Activated CD8-positive, alpha-beta T cell treated with anti-CD3 and anti-CD28 coated beads, Interleukin-2, amount 10 ng/mL, durations not matched to agents 7 days and 5 days (primary cell): ENCODE measurements at regions of chr17 and their contacts with region 1.

Region 1: GRCh38 chr17:77068915-77069314 is 71.9 kb upstream of the SEC14L1 start:
- DNase-seq: no peak
- ATAC-seq: no peak
- H3K4me3 Mint-ChIP-seq: no peak overlapping the region
- H3K27ac Mint-ChIP-seq: no peak overlapping the region
- H3K4me1 Mint-ChIP-seq: peaks cover 1% of the 10 kb centered on the region
- H3K27me3 Mint-ChIP-seq: peaks cover 22% of the 10 kb centered on the region

Region 2: DNA sequence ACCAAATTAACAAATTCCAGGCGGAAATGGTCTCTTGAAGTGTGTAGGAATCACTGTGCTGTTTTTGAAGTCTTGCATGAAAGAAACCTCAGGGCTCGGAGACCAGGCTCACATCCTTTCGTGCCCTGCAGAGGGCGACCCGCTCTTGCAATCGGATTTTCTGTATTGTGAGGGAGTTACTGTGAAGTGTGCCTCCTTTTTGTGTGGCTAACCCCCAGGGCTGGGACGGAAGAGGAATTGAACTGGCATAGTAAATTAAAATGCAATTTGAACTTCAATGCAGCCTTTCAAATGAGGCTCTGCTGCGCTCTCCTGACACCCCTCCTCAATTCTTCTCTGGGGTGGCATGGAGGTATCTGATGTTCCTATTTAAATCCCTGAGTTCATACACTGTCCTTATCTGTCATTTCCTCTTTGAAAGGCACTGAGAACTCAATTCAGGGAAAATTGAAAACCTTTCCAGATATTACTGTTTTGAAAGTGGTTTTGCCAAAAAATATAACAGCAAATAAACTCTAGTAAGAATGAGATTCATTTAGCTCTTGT is 252.3 kb before region 1 on chr17:
- CTCF ChIA-PET with region 1: interaction called, 10 read pairs
- POLR2A ChIA-PET with region 1: no interaction called
- DNase-seq: peak; percentile 79
- ATAC-seq: peak; percentile 93
- H3K4me3 Mint-ChIP-seq: no peak overlapping the region
- H3K27ac Mint-ChIP-seq: no peak overlapping the region
- H3K4me1 Mint-ChIP-seq: peaks cover 7% of the 10 kb centered on the region
- H3K27me3 Mint-ChIP-seq: peaks cover 5% of the 10 kb centered on the region

Region 3: GRCh38 chr17:76868176-76868668 is 200.7 kb before region 1 on chr17 and contains the start of gene MGAT5B:
- CTCF ChIA-PET with region 1: interaction called, 38 read pairs
- POLR2A ChIA-PET with region 1: no interaction called
- DNase-seq: peak; percentile 77
- ATAC-seq: peak; percentile 97
- H3K4me3 Mint-ChIP-seq: peak within 1 kb of the TSS; percentile 40
- H3K27ac Mint-ChIP-seq: no peak within 1 kb of the TSS
- H3K4me1 Mint-ChIP-seq: peaks cover 15% of the 10 kb centered on the region
- H3K27me3 Mint-ChIP-seq: peaks cover 28% of the 10 kb centered on the region
- total RNA-seq, gene MGAT5B: 0.26 TPM in 1 of 2 experiments, not detected in the other

Region 4: DNA sequence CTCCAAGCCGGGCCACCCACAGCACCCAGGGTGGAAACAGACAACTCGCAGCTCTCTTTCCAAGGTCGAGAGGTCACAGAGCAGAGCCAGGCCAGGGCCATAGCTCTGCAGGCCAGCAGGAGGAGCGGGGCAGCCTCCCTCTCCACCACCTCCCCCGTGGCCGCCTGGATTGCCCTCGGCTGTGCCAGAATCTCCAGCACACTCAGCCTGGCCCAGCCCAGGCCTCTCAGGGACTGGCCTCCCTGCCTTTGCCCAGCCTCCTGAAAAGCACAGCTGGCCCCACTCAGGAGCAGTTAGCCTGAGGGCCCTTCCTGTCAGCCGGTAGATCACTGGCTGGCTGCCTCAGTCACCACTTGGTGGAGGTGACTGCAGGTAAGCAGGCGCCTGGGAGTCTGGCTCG is 14.0 kb before region 1 on chr17:
- CTCF ChIA-PET with region 1: interaction called, 42 read pairs
- POLR2A ChIA-PET with region 1: interaction called, 4 read pairs
- DNase-seq: no peak
- ATAC-seq: no peak
- H3K4me3 Mint-ChIP-seq: no peak overlapping the region
- H3K27ac Mint-ChIP-seq: no peak overlapping the region
- H3K4me1 Mint-ChIP-seq: no peaks in the 10 kb centered on the region
- H3K27me3 Mint-ChIP-seq: peaks cover 9% of the 10 kb centered on the region

Region 5: GRCh38 chr17:77079025-77079714 is 10.3 kb after region 1 on chr17:
- CTCF ChIA-PET with region 1: interaction called, 10 read pairs
- POLR2A ChIA-PET with region 1: no interaction called
- DNase-seq: no peak
- ATAC-seq: no peak
- H3K4me3 Mint-ChIP-seq: no peak overlapping the region
- H3K27ac Mint-ChIP-seq: no peak overlapping the region
- H3K4me1 Mint-ChIP-seq: no peaks in the 10 kb centered on the region
- H3K27me3 Mint-ChIP-seq: peaks cover 10% of the 10 kb centered on the region

Region 6: DNA sequence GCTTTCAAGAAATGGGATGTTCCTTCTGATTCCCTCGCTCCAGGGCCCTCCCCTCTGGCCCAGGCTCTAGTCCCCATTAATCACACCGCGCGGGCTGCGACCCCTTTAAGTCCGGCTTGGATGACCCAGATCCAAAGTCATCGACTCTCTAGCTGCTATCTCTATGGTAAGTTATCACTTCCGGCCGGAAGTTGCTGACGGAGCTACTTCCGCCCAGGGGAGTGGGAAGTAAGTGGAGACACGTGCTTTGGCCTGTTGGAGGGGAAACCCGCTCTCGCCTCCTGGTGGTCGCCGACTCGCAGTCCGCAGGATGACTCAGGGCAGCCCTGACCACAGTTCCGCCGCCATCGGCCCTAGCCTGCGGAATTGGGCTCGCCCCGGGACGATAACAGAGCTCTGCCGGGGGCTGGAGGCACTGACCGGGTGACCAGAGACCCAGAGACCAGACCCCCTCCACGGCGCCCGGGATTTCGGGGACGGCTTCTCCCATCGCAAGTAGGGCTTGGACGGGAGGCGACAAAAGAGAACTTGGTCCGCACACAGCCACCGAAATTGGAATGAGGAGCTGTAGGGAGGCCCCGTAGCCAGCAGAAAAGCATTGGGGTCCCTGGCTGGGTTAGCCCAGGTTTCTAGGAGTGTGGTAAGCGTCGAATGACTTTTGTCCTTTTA is 19.7 kb after region 1 on chr17:
- CTCF ChIA-PET with region 1: interaction called, 15 read pairs
- POLR2A ChIA-PET with region 1: no interaction called
- DNase-seq: peak; percentile 94
- ATAC-seq: peak; percentile 92
- H3K4me3 Mint-ChIP-seq: peak overlapping the region; percentile 91
- H3K27ac Mint-ChIP-seq: peak overlapping the region; percentile 97
- H3K4me1 Mint-ChIP-seq: peaks cover 62% of the 10 kb centered on the region
- H3K27me3 Mint-ChIP-seq: no peaks in the 10 kb centered on the region

Region 7: DNA sequence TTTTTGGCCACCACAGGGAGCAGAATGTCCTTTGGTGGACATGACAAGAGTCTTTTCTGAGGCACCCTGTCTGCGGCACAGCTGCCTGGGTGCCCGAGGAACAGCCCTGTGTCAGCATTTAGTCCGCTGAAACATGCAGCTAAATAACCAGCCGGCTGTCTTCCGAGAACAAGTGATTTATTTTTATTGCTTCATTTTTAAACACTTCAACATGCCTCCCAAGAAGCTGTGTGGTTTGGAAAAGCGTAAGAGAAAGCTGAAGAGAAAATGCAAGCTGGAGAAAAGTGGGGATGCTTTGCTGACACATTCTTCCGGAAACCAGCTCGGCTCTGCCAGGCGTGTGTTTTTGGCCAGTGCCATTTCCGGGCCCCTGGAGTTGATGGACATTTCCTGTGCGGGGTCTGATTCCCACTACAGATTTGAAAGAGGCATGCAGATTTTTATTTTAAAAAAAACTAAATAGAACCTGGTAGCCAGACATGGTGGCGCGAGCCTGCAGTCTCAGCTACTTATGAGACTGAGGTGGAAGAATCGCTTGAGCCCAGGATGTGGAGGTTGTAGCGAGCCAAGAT is 166.5 kb after region 1 on chr17:
- CTCF ChIA-PET with region 1: no interaction called
- POLR2A ChIA-PET with region 1: no interaction called
- DNase-seq: peak; percentile 72
- ATAC-seq: peak; percentile 73
- H3K4me3 Mint-ChIP-seq: peak overlapping the region; percentile 67
- H3K27ac Mint-ChIP-seq: peak overlapping the region; percentile 91
- H3K4me1 Mint-ChIP-seq: peaks cover 28% of the 10 kb centered on the region
- H3K27me3 Mint-ChIP-seq: no peaks in the 10 kb centered on the region